ENCODE measurements at regions of chr4 and their contacts with region 1.

Region 1: GRCh38 chr4:74320559-74321118 is 12.4 kb downstream of the EPGN start:
- DNase-seq: no peak
- H3K4me3 Mint-ChIP-seq: no peak overlapping the region
- H3K27ac Mint-ChIP-seq: no peak overlapping the region
- H3K4me1 Mint-ChIP-seq: no peaks in the 10 kb centered on the region
- H3K27me3 Mint-ChIP-seq: peaks cover 18% of the 10 kb centered on the region

Region 2: GRCh38 chr4:74235135-74235534 is 85.5 kb before region 1 on chr4:
- CTCF ChIA-PET with region 1: no interaction called
- POLR2A ChIA-PET with region 1: no interaction called
- DNase-seq: no peak
- H3K4me3 Mint-ChIP-seq: no peak overlapping the region
- H3K27ac Mint-ChIP-seq: no peak overlapping the region
- H3K4me1 Mint-ChIP-seq: peaks cover 24% of the 10 kb centered on the region
- H3K27me3 Mint-ChIP-seq: no peaks in the 10 kb centered on the region

Region 3: DNA sequence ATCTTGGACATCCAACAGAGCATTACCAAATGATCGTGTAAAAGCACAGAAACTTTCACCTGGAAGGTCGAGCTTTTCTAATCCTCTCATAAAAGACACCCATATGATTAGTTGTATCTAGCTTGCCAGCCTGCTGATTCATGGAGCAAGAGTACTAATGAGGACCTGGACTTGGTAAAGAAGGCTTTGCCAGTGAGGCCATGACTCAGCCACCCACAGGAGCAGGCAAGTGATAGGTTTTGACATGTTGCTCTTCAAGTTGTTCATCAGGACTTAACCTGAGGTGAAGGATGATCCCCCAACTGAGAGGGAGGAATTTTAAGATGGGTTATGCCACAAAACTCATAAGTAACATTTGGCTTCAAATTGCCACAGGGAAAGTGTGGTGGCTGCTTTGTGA is 37.0 kb before region 1 on chr4:
- CTCF ChIA-PET with region 1: no interaction called
- POLR2A ChIA-PET with region 1: no interaction called
- DNase-seq: no peak
- H3K4me3 Mint-ChIP-seq: no peak overlapping the region
- H3K27ac Mint-ChIP-seq: no peak overlapping the region
- H3K4me1 Mint-ChIP-seq: no peaks in the 10 kb centered on the region
- H3K27me3 Mint-ChIP-seq: no peaks in the 10 kb centered on the region

Region 4: GRCh38 chr4:74623041-74623440 is 302.4 kb after region 1 on chr4:
- CTCF ChIA-PET with region 1: no interaction called
- POLR2A ChIA-PET with region 1: no interaction called
- DNase-seq: no peak
- H3K4me3 Mint-ChIP-seq: no peak overlapping the region
- H3K27ac Mint-ChIP-seq: no peak overlapping the region
- H3K4me1 Mint-ChIP-seq: peaks cover 12% of the 10 kb centered on the region
- H3K27me3 Mint-ChIP-seq: no peaks in the 10 kb centered on the region

Region 5: DNA sequence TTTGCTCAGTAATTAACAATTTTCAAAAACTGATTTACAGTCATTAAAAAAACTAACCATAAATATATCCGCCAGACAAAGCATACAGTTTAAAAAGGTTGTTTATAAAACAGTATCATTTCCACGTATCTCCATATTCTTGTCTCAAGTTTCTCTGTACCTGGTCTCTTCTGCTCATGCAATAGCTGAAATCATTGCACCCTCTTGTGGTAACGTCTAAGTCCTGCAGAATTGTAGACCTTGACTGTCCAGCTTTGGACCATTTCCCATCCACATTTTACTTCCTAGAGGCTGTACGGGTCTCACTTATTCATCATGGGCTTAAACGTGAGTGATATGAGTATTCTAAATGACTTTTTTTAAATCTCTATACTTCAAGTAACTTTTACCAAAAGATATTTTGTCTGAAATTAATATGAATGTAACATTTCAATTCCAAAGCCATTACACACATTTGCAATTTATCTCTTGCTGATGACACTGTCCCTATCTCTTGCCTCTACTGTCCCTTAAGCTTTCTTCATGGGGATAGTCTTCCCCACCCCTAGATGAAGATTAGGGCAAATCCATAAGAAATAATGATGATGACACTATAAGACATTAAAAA is 355.1 kb after region 1 on chr4:
- CTCF ChIA-PET with region 1: interaction called, 11 read pairs
- POLR2A ChIA-PET with region 1: no interaction called
- DNase-seq: no peak
- H3K4me3 Mint-ChIP-seq: no peak overlapping the region
- H3K27ac Mint-ChIP-seq: no peak overlapping the region
- H3K4me1 Mint-ChIP-seq: peaks cover 2% of the 10 kb centered on the region
- H3K27me3 Mint-ChIP-seq: peaks cover 22% of the 10 kb centered on the region

Measured in activated CD4-positive, alpha-beta memory T cell treated with anti-CD3 and anti-CD28 coated beads, Interleukin-2, amount 10 ng/mL, durations not matched to agents 7 days and 5 days (primary cell).